Dorsolateral prefrontal cortex (tissue), 120 donors: ENCODE measurements at regions of chr1 and their contacts with region 1.

Region 1: DNA sequence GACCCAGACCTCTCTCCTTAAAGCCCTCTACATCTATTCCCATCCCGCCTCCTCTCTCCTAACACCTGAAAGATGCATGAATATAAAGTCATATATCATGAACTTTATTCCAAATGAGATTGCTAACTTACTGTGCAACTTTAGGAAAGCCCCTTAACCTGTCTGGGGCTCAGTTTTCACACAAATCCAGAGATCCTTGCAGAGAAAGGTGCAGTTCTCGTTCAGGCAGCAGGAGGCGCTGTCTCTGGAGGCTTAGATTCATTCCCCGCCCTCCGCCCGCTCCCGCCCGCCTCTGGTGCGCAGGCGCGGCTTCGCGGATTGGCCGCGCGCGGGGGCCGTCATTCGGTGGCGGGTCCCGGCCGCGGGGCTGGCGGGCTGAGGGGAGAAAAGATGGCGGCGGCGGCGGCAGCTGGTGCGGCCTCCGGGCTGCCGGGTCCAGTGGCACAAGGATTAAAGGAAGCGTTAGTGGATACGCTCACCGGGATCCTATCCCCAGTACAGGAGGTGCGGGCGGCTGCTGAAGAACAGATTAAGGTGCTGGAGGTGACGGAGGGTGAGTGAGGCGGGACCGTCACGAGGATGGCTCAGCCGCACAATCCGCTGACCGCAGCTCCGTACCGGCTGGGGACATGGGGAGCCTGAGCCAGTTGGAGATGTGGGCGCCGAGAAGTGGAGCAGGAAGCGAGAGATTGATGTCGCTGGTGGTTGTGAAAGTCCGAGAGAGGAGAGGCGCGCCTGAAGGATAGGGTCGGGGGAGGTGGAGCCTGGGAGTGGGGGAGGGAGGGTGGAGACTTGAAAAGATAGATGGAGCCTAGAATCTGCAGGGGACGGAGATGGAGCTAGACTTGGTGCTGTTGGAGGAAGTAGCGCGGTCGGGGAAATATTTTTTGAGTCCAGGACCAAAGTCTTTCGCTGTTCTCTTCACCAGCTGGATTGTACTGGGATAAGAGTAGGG is at the start of gene IPO9:
- DNase-seq: peak; percentile 89 to 94 (median 90)
- H3K4me3 ChIP-seq: peak within 1 kb of the TSS; percentile 66 to 100 (median 92)
- H3K27ac ChIP-seq: peak within 1 kb of the TSS; percentile 46 to 97 (median 91)
- H3K27me3 ChIP-seq: no peaks in the 10 kb centered on the region
- CTCF ChIP-seq: peak; percentile 91 to 100 (median 99)
- total RNA-seq, gene IPO9: 39.9 to 70.3 (median 56.0) TPM

Region 2: DNA sequence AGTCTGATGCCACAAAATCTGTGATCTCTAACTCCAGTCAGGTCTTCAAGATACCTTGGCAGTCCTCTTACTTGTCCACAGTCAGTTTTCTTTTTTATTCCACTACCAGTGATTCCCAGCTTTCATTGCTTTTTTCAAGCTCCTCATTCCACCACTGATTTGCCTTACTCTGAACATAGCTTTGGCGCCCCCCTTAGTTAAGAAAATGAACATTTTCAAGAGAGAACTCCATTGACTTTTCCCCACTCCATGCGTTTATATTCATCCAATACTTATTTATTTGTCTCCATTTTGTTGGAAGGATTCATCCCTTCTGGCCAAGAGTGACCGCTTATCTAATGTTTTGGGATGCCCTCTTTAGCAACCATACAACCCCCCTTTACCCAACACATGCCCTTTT is 34.0 kb before region 1 on chr1:
- intact Hi-C with region 1: no loop called
- DNase-seq: no peak
- H3K4me3 ChIP-seq: no peak overlapping the region
- H3K27ac ChIP-seq: peak overlapping the region in 30 of 59 donors; percentile 8 to 99 (median 40)
- H3K27me3 ChIP-seq: no peaks in the 10 kb centered on the region
- CTCF ChIP-seq: peak in 54 of 56 donors; percentile 22 to 70 (median 48)

Region 3: GRCh38 chr1:201877877-201878401 is 48.8 kb after region 1 on chr1:
- intact Hi-C with region 1: loop called in 1 of 2 experiments (anchors 5 kb)
- DNase-seq: peak in 3 of 10 donors; percentile 40 to 51 (median 47)
- H3K4me3 ChIP-seq: no peak overlapping the region
- H3K27ac ChIP-seq: peak overlapping the region in 58 of 59 donors; percentile 0 to 91 (median 82)
- H3K27me3 ChIP-seq: no peaks in the 10 kb centered on the region
- CTCF ChIP-seq: peak; percentile 63 to 87 (median 76)

Region 4: GRCh38 chr1:201888282-201889089 is 59.4 kb after region 1 on chr1 and contains the start of gene SHISA4:
- intact Hi-C with region 1: loop called (anchors 5 kb)
- DNase-seq: peak; percentile 83 to 97 (median 94)
- H3K4me3 ChIP-seq: peak within 1 kb of the TSS; percentile 47 to 95 (median 86)
- H3K27ac ChIP-seq: peak within 1 kb of the TSS; percentile 60 to 99 (median 97)
- H3K27me3 ChIP-seq: no peaks in the 10 kb centered on the region
- CTCF ChIP-seq: peak in 25 of 56 donors; percentile 5 to 49 (median 17)
- total RNA-seq, gene SHISA4: 65.2 to 163 (median 110) TPM

Region 5: DNA sequence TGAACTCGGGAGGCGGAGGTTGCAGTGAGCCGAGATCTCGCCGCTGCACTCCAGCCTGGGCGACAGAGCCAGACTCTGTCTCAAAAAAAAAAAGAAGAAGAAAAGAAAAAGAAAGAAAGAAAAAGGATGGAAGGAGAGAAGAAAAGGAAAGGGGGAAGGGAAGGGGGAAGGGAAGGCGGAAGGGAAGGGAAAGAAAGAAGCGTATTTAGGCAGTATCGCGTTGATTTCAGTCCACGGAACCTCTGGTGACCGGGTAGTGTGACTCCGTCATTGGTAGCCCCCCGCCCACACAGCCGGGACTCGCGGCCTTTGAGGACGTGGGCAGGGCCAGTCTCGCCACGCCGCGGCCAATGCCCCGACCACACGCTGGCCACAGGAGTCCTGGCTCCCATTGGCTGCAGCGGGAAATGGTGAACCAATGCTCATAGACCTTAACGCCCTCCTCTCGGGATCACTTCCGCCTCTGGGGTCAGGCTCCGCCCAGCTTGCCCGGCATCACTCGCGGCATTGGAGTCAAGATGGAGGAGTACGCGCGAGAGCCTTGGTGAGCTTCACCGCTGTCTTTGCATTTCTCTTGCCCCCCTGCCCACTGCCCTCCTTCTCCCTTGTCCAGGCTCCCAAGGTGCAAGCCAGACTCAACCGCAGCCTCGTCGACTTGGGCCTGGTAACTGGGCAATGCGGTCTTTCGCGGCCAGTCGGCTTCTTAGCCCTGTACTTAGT is 126.1 kb after region 1 on chr1 and contains the start of gene TIMM17A:
- intact Hi-C with region 1: loop called (anchors 5 kb)
- DNase-seq: peak; percentile 93 to 98 (median 98)
- H3K4me3 ChIP-seq: peak within 1 kb of the TSS; percentile 54 to 100 (median 93)
- H3K27ac ChIP-seq: peak within 1 kb of the TSS in 57 of 59 donors; percentile 26 to 92 (median 83)
- H3K27me3 ChIP-seq: no peaks in the 10 kb centered on the region
- CTCF ChIP-seq: peak in 40 of 56 donors; percentile 7 to 56 (median 34)
- total RNA-seq, gene TIMM17A: 24.0 to 84.7 (median 54.1) TPM

Region 6: DNA sequence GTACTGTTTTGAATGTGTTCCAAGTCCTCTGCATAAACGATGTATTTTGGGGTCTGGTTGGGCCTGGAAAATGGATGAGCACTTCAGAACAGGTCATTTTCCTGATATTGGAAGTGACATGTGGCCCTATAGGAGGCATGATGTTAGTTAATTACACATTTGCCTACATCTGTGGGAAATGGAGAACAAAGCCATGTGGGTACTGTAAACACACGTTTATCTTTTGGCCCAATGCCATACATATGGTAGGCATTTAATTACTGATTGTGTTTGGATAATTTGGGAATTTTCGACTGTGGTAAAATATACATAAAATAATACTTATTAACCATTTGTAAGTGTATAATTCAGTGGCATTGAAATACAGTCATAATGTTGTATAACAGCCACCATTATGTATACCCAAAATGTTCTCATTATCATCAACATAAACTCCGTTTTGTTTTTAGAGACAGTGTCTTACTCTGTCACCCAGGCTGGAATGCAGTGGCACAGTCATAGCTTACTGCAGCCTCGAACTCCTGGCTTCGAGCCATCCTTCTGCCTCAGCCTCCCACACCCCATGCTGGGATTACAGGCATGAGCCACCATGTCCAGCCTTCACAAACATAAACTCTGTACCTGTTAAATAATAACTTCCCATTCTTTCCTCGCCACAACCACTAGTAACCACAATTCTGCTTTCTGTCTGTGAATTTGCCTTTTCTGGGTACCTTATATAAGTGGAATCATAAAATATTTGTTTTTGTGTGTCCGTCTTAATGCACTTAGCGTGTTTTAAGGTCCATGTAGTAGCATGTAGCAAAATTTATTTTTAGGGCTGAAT is 141.4 kb after region 1 on chr1:
- intact Hi-C with region 1: loop called in 1 of 2 experiments (anchors 2 kb)
- DNase-seq: peak in 4 of 10 donors; percentile 25 to 69 (median 36)
- H3K4me3 ChIP-seq: no peak overlapping the region
- H3K27ac ChIP-seq: peak overlapping the region in 38 of 59 donors; percentile 1 to 71 (median 38)
- H3K27me3 ChIP-seq: no peaks in the 10 kb centered on the region
- CTCF ChIP-seq: no peak